RWPE1 (cell line): ENCODE measurements at regions of chr11 and their contacts with region 1.

Region 1: DNA sequence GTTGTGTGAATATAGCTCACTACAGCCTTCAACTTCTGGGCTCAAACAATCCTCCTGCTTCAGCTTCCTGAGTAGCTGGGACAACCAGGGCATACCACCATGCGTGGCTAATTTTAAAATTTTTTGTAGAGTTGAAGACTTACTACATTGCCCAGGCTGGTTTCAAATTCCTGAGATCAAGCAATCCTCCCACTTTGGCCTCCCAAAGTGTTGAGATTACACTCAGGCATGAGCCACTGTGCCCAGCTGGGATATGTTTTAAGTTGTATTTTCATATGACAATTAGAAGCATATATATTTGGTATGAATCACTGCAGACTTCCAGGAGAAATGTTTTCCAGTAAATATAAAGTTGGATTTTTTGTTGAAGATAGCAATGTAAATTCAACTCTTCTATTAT is 15.4 kb downstream of the DDX10 start:
- DNase-seq: no peak
- H3K27ac ChIP-seq: no peak overlapping the region
- CTCF ChIP-seq: no peak

Region 2: GRCh38 chr11:107928046-107928766 is 752.1 kb before region 1 on chr11 and contains the start of gene RAB39A:
- CTCF ChIA-PET with region 1: no interaction called
- POLR2A ChIA-PET with region 1: interaction called, 10 read pairs
- DNase-seq: peak; percentile 98
- H3K27ac ChIP-seq: no peak within 1 kb of the TSS
- CTCF ChIP-seq: no peak

Region 3: GRCh38 chr11:108559340-108559739 is 120.9 kb before region 1 on chr11:
- CTCF ChIA-PET with region 1: no interaction called
- POLR2A ChIA-PET with region 1: no interaction called
- DNase-seq: no peak
- H3K27ac ChIP-seq: no peak overlapping the region
- CTCF ChIP-seq: no peak

Region 4: GRCh38 chr11:108754901-108755632 is 74.8 kb after region 1 on chr11:
- CTCF ChIA-PET with region 1: no interaction called
- POLR2A ChIA-PET with region 1: no interaction called
- DNase-seq: no peak
- H3K27ac ChIP-seq: no peak overlapping the region
- CTCF ChIP-seq: no peak